Transverse colon (tissue), 4 donors: ENCODE measurements at regions of chr15 and their contacts with region 1.

Region 1: GRCh38 chr15:27561816-27562215 is 537.3 kb downstream of the OCA2 start:
- DNase-seq: no peak
- H3K4me3 ChIP-seq: no peak overlapping the region
- H3K27ac ChIP-seq: no peak overlapping the region
- H3K4me1 ChIP-seq: no peaks in the 10 kb centered on the region
- H3K27me3 ChIP-seq: no peaks in the 10 kb centered on the region
- CTCF ChIP-seq: no peak
- EP300 ChIP-seq: no peak
- POLR2A ChIP-seq: no peak

Region 2: DNA sequence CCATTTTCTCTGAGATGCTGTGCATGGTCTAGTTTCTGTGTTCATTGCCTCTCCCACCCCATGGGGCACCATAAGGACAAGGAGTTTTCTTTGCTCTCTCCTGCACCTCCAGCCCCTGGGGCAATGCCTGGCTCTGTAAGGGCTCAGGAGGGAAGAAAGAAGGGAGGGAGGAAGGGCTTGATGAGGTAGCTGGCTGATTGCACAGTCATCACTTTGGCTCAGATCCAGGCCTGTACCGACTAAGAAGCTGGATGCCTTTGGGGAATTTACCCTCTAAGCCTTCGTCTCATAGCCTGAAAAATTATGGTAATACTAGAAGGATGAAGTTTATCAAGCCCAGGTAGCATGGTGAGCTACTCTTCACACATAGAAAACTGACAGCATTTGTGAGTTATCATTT is 208.0 kb before region 1 on chr15:
- in situ Hi-C with region 1: no loop called
- intact Hi-C with region 1: no loop called
- DNase-seq: no peak
- H3K4me3 ChIP-seq: no peak overlapping the region
- H3K27ac ChIP-seq: no peak overlapping the region
- H3K4me1 ChIP-seq: no peaks in the 10 kb centered on the region
- H3K27me3 ChIP-seq: no peaks in the 10 kb centered on the region
- CTCF ChIP-seq: no peak
- EP300 ChIP-seq: no peak
- POLR2A ChIP-seq: no peak

Region 3: DNA sequence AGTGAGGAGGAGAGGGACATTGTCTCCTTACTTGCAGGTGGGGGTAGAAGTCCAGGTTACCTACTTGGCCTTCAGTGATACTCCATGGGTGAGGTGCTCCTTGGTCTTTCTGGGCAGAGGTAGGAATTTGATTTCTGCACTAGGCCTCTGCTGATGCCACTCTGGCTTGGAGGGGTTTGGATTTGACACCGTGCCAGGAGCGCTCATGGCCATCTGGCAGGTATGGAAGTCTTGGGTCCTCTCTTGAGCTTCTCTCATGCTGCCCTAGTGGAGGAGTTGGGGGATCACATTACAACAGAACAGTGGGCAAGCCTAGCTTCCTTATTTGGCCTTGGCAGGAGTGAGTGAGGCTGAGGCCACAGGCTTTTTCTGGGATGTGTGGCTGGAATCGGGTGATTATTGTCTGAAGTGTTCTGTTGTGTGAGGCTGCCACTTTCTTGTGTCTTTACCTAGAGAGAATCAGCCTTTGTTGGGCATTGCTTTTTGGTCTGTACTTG is 65.8 kb before region 1 on chr15:
- in situ Hi-C with region 1: no loop called
- intact Hi-C with region 1: no loop called
- DNase-seq: no peak
- H3K4me3 ChIP-seq: no peak overlapping the region
- H3K27ac ChIP-seq: no peak overlapping the region
- H3K4me1 ChIP-seq: no peaks in the 10 kb centered on the region
- H3K27me3 ChIP-seq: no peaks in the 10 kb centered on the region
- CTCF ChIP-seq: no peak
- EP300 ChIP-seq: no peak
- POLR2A ChIP-seq: no peak

Region 4: DNA sequence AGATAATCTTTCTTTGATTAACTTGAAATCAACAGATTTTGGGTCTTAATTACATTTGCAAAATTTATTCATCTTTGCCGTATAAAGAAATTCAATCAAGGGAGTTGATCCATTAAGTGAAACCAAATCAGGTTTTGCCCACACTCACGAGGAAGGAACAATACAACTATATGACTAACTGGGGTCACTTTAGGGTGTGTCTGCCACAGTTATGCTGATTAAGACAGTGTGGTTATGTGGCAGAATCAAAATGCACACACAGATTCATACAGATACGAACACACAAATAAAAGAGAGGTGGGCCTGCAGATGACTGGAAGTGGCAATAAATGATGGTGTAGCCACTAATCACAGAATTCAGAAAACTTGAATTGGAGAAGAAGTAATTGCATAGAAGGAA is 47.3 kb before region 1 on chr15:
- in situ Hi-C with region 1: loop called in 1 of 4 experiments (anchors 10 kb)
- intact Hi-C with region 1: no loop called
- DNase-seq: no peak
- H3K4me3 ChIP-seq: no peak overlapping the region
- H3K27ac ChIP-seq: no peak overlapping the region
- H3K4me1 ChIP-seq: no peaks in the 10 kb centered on the region
- H3K27me3 ChIP-seq: no peaks in the 10 kb centered on the region
- CTCF ChIP-seq: no peak
- EP300 ChIP-seq: no peak
- POLR2A ChIP-seq: no peak

Region 5: DNA sequence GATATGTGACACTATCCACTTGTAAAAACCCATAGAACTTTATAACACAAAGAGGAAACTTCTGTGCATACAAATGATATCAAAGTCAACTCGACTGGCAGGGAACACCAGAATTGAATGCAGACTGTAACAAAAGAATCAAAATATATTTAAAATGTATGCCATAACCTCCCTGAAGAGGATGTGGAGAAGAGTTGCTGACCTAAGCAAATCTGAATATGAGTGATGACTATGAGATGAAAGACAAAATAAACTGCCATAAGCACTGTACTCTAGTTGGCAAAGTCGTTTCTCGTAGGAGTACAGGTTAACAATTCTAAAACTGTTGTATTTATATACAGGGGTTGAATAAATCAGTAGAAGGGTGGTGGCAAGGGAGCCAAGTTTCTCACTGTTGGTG is 55.2 kb after region 1 on chr15:
- in situ Hi-C with region 1: no loop called
- intact Hi-C with region 1: loop called (anchors 2 kb)
- DNase-seq: no peak
- H3K4me3 ChIP-seq: no peak overlapping the region
- H3K27ac ChIP-seq: no peak overlapping the region
- H3K4me1 ChIP-seq: no peaks in the 10 kb centered on the region
- H3K27me3 ChIP-seq: no peaks in the 10 kb centered on the region
- CTCF ChIP-seq: no peak
- EP300 ChIP-seq: no peak
- POLR2A ChIP-seq: no peak